ENCODE measurements at regions of chr1 and their contacts with region 1.

Region 1: DNA sequence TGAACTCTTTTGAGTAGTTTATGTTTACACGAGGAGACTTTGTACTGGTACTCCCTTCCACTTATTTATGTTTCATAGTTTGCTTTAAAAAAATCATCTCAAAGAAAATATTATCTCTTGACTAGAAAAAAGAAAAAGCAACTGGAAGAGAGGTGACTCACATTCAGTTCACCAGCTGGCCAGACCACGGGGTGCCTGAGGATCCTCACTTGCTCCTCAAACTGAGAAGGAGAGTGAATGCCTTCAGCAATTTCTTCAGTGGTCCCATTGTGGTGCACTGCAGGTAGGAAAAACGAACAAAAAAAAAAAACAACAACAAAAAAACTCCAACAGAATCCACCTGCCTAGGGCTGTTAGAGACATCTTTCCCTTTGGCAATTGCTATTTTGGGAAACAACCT is 102.9 kb downstream of the PTPRC start:
- DNase-seq: no peak

Region 2: DNA sequence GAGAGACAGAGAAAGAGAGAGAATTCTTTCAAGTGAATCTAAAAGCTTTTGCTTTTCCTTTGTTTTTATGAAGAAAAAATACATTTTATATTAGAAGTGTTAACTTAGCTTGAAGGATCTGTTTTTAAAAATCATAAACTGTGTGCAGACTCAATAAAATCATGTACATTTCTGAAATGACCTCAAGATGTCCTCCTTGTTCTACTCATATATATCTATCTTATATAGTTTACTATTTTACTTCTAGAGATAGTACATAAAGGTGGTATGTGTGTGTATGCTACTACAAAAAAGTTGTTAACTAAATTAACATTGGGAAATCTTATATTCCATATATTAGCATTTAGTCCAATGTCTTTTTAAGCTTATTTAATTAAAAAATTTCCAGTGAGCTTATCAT is 14.7 kb after region 1 on chr1:
- intact Hi-C with region 1: loop called in 1 of 2 experiments (anchors 1 kb)
- DNase-seq: no peak